Calu3 (cell line): ENCODE measurements at regions of chr19 and their contacts with region 1.

Region 1: DNA sequence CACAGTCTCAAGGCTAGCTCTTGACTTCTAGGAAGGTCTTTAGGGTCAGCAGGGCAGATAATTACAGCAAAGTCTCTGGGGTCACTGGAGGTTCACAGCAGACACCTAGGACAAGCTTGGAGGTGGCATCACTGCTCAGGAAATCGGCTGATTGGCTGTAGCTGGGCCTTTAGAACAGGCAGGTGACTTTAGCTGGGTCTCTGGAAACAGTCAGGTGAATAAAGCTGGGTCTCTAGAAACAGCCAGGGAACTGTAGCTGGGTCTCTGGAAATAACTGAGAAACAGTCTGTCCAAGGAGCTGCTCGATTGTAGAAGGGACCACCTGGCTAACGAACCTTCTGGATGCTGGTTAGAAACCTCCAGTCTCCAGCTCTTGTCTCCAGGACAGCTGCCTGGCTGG is 10.0 kb downstream of the LAIR1 start:
- DNase-seq: no peak
- H3K4me3 Mint-ChIP-seq: no peak overlapping the region
- H3K27ac Mint-ChIP-seq: no peak overlapping the region
- H3K4me1 Mint-ChIP-seq: peaks cover 8% of the 10 kb centered on the region
- H3K27me3 Mint-ChIP-seq: peaks cover 19% of the 10 kb centered on the region
- CTCF ChIP-seq: no peak

Region 2: DNA sequence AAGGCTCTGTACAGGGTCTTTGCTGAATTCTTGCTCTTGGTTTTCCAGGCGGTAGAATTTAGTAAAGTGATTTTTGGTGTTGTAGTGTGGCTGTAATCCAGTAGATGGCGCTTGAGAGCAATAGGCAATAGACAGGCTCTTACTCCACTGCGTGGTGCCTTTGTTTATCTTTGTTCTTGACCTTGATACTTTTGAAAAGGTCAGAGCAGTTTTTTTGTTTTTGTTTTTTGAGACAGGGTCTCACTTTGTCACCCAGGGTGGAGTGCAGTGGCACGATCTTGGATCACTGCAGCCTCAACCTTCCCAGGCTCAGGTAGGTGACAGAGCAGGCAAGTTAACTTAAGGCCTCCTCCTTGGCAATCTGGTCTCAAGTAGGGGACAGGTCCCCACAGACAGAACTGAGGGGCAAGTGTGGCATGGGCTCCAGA is 29.6 kb before region 1 on chr19:
- CTCF ChIA-PET with region 1: interaction called, 3 read pairs
- intact Hi-C with region 1: loop called (anchors 1 kb)
- DNase-seq: peak; percentile 56
- H3K4me3 Mint-ChIP-seq: no peak overlapping the region
- H3K27ac Mint-ChIP-seq: no peak overlapping the region
- H3K4me1 Mint-ChIP-seq: no peaks in the 10 kb centered on the region
- H3K27me3 Mint-ChIP-seq: peaks cover 49% of the 10 kb centered on the region
- CTCF ChIP-seq: peak; percentile 69